Calu3 (cell line): ENCODE measurements at regions of chr11 and their contacts with region 1.

Region 1: GRCh38 chr11:130159657-130160497 is at the start of gene ST14:
- DNase-seq: peak; percentile 81
- H3K4me3 Mint-ChIP-seq: peak within 1 kb of the TSS; percentile 82
- H3K27ac Mint-ChIP-seq: peak within 1 kb of the TSS; percentile 83
- H3K4me1 Mint-ChIP-seq: peaks cover 54% of the 10 kb centered on the region
- H3K27me3 Mint-ChIP-seq: no peaks in the 10 kb centered on the region
- CTCF ChIP-seq: no peak
- total RNA-seq, gene ST14: 153 and 174 TPM in 2 replicates

Region 2: GRCh38 chr11:129946256-129946655 is 213.6 kb before region 1 on chr11:
- CTCF ChIA-PET with region 1: no interaction called
- intact Hi-C with region 1: no loop called
- DNase-seq: no peak
- H3K4me3 Mint-ChIP-seq: no peak overlapping the region
- H3K27ac Mint-ChIP-seq: no peak overlapping the region
- H3K4me1 Mint-ChIP-seq: no peaks in the 10 kb centered on the region
- H3K27me3 Mint-ChIP-seq: no peaks in the 10 kb centered on the region
- CTCF ChIP-seq: no peak

Region 3: GRCh38 chr11:130181295-130182272 is 21.7 kb after region 1 on chr11:
- CTCF ChIA-PET with region 1: interaction called, 5 read pairs
- intact Hi-C with region 1: loop called (anchors 2 kb)
- DNase-seq: no peak
- H3K4me3 Mint-ChIP-seq: peak overlapping the region; percentile 26
- H3K27ac Mint-ChIP-seq: peak overlapping the region; percentile 61
- H3K4me1 Mint-ChIP-seq: peaks cover 42% of the 10 kb centered on the region
- H3K27me3 Mint-ChIP-seq: no peaks in the 10 kb centered on the region
- CTCF ChIP-seq: no peak

Region 4: GRCh38 chr11:131511794-131512193 is 1351.9 kb after region 1 on chr11:
- CTCF ChIA-PET with region 1: no interaction called
- intact Hi-C with region 1: no loop called
- DNase-seq: no peak
- H3K4me3 Mint-ChIP-seq: no peak overlapping the region
- H3K27ac Mint-ChIP-seq: no peak overlapping the region
- H3K4me1 Mint-ChIP-seq: no peaks in the 10 kb centered on the region
- H3K27me3 Mint-ChIP-seq: no peaks in the 10 kb centered on the region
- CTCF ChIP-seq: no peak